ENCODE measurements at regions of chr16 and their contacts with region 1.

Region 1: GRCh38 chr16:85086347-85087291 is 25.7 kb downstream of the CIBAR2 start:
- DNase-seq: peak; percentile 48 to 87 (median 72)
- ATAC-seq: peak; percentile 78 to 90
- H3K4me3 Mint-ChIP-seq: no peak overlapping the region
- H3K27ac Mint-ChIP-seq: peak overlapping the region in 5 of 10 donors; percentile 21 to 69 (median 34)
- H3K4me1 Mint-ChIP-seq: peaks cover 6 to 43% (median 37%) of the 10 kb centered on the region in 4 donors
- H3K27me3 Mint-ChIP-seq: no peaks in the 10 kb centered on the region

Region 2: GRCh38 chr16:85010931-85011845 is 75.4 kb before region 1 on chr16 and contains the start of gene ZDHHC7:
- POLR2A ChIA-PET with region 1: interaction called, 14 read pairs
- DNase-seq: peak; percentile 78 to 92 (median 86)
- ATAC-seq: peak; percentile 93 to 94
- H3K4me3 Mint-ChIP-seq: peak within 1 kb of the TSS; percentile 95 to 99 (median 97)
- H3K27ac Mint-ChIP-seq: peak within 1 kb of the TSS; percentile 98 to 100 (median 99)
- H3K4me1 Mint-ChIP-seq: peaks cover 20 to 55% (median 45%) of the 10 kb centered on the region in 4 donors
- H3K27me3 Mint-ChIP-seq: no peaks in the 10 kb centered on the region
- polyA plus RNA-seq, gene ZDHHC7: 28.8 to 45.3 (median 37.7) TPM

Region 3: GRCh38 chr16:85055503-85056210 is 31.0 kb before region 1 on chr16:
- POLR2A ChIA-PET with region 1: interaction called, 14 read pairs
- DNase-seq: peak; percentile 40 to 92 (median 76)
- ATAC-seq: peak; percentile 90 to 96
- H3K4me3 Mint-ChIP-seq: peak overlapping the region; percentile 77 to 92 (median 82)
- H3K27ac Mint-ChIP-seq: peak overlapping the region; percentile 92 to 99 (median 96)
- H3K4me1 Mint-ChIP-seq: peaks cover 27 to 79% (median 46%) of the 10 kb centered on the region in 4 donors
- H3K27me3 Mint-ChIP-seq: no peaks in the 10 kb centered on the region

Region 4: DNA sequence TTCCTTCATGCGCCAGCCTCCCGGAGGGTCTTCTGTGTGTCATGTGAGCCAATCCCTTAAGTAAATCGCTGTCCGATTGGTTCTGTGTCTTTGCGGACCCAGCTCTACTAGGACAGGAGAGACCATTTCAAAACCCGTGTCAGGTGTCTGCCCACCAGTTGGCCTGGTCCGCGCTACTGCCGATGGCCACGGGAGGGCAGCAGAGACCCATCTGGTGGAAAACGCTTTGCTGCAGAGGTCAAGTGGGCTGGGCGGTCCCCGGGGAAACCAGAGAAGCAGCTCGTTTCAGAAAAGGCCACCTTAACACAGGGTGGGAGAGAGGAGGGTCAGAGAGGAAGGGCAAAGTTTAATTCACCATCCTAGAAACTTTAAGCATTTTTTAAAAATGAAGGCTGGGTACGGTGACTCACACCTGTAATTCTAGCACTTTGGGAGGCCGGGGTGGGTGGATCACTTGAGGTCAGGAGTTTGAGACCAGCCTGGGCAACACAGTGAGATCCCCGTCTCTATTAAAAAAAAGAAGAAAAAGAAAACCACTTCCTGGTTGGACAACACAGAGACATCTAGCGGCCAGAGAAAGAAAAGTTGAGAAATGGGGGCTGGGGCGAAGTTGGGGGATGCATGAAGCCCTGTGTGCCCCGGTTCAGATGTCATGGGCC is 28.4 kb after region 1 on chr16:
- POLR2A ChIA-PET with region 1: no interaction called
- DNase-seq: peak; percentile 55 to 83 (median 72)
- ATAC-seq: peak; percentile 89 to 96
- H3K4me3 Mint-ChIP-seq: peak overlapping the region; percentile 58 to 86 (median 79)
- H3K27ac Mint-ChIP-seq: peak overlapping the region; percentile 38 to 89 (median 72)
- H3K4me1 Mint-ChIP-seq: peaks cover 7 to 12% (median 9%) of the 10 kb centered on the region in 4 donors
- H3K27me3 Mint-ChIP-seq: no peaks in the 10 kb centered on the region

Region 5: DNA sequence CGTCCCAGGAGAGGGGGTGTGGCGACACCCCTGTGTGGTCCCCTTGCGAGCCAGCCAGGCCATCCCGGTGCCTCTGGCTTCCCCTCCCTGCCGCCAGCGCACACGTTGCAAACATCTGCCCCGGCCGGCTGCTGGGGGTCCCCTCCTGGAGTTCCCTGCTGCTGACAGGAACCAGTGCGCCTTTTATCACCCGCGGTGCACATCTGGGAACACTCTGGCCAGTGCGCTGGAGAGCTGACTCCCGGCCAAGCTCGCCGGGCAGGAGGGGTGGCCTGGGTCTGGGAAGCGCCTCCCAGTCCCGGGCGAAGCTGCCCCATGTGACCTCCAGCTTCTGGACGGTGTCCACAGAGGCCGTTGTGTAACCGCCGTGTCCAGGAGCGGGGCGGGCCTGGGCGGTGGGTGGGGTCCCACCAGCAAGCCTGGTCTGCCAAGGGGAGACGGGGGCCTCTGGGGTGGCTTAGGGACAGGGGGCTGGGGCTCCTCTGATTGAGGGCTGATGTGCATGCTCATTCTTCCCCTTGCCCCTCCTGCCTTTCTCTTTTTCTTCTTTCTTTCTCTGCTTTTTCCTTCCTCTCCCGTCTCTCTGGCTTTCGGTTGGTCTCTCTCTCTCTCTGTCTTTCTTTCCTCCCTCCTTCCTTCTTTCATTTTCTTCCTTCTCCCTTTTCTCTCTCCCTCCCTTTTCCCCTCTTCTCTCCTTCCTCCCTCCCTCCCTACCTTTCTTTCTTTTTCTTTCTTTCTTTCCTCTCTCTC is 50.9 kb after region 1 on chr16:
- POLR2A ChIA-PET with region 1: no interaction called
- DNase-seq: no peak
- ATAC-seq: no peak
- H3K4me3 Mint-ChIP-seq: peak overlapping the region in 5 of 10 donors; percentile 1 to 69 (median 26)
- H3K27ac Mint-ChIP-seq: peak overlapping the region in 1 of 10 donors; percentile 82
- H3K4me1 Mint-ChIP-seq: peaks cover 9 to 19% (median 16%) of the 10 kb centered on the region in 4 donors
- H3K27me3 Mint-ChIP-seq: peaks cover 14 to 48% (median 29%) of the 10 kb centered on the region in 5 donors